ENCODE measurements at regions of chr17 and their contacts with region 1.

Region 1: DNA sequence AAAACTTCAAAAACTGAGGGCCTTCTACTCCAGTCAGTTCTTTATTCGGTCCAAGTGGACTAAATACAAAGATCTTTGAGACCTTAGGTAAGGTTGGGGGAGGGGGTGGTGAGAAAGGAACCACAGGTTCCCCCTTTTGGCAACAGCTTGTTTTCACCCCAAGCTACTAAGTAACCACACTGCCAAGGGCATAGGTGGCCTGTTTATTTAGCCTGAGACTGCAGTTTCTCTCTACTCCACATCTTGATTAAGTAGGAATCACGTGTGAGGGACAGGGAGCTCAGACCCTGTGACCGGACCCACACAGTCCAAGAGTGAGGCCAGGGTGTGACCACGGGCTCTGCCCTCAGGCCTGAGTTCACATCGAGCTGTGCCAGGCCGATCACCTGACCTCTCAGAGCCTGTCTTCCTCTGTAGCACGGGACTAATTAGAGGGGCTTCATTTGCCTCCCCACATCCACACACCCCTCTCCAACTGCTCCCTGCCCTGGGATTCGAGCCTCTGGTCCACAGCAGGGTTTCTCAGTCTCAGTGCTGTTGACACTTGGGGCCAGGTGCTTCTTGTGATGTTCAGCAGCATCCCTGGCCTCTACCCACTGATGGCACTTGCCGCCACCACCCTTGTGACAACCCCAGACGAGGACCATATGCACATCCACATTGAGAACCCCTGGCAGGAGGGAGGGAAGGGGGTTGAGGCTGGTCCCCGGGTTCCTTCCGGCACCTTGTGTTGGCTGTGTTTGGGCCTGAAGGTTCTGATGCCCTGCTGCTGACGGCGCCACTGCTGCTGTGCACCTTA is 17.8 kb downstream of the ST6GALNAC2 start:
- DNase-seq: peak; percentile 60
- ATAC-seq: peak; percentile 45
- H3K4me3 ChIP-seq: no peak overlapping the region
- H3K27ac ChIP-seq: peak overlapping the region; percentile 45
- H3K4me1 ChIP-seq: peaks cover 75% of the 10 kb centered on the region
- H3K27me3 ChIP-seq: no peaks in the 10 kb centered on the region
- CTCF ChIP-seq: no peak
- EP300 ChIP-seq: no peak
- POLR2A ChIP-seq: peak in 1 of 2 experiments; percentile 30
- RAD21 ChIP-seq: peak; percentile 7; the same call in 1 of the 2 replicates

Region 2: GRCh38 chr17:76529224-76530094 is 38.4 kb before region 1 on chr17:
- CTCF ChIA-PET with region 1: no interaction called
- POLR2A ChIA-PET with region 1: interaction called, 13 read pairs
- in situ Hi-C with region 1: no loop called
- intact Hi-C with region 1: no loop called
- DNase-seq: peak; percentile 61
- ATAC-seq: peak; percentile 13
- H3K4me3 ChIP-seq: peak overlapping the region in 1 of 3 experiments; percentile 35; a peak in 1 of 6 replicates
- H3K27ac ChIP-seq: peak overlapping the region; percentile 60
- H3K4me1 ChIP-seq: peaks cover 91% of the 10 kb centered on the region
- H3K27me3 ChIP-seq: no peaks in the 10 kb centered on the region
- CTCF ChIP-seq: peak; percentile 22; the same call in 1 of the 2 replicates
- EP300 ChIP-seq: peak; percentile 19; a peak in 1 of 4 replicates
- POLR2A ChIP-seq: no peak
- RAD21 ChIP-seq: no peak

Region 3: DNA sequence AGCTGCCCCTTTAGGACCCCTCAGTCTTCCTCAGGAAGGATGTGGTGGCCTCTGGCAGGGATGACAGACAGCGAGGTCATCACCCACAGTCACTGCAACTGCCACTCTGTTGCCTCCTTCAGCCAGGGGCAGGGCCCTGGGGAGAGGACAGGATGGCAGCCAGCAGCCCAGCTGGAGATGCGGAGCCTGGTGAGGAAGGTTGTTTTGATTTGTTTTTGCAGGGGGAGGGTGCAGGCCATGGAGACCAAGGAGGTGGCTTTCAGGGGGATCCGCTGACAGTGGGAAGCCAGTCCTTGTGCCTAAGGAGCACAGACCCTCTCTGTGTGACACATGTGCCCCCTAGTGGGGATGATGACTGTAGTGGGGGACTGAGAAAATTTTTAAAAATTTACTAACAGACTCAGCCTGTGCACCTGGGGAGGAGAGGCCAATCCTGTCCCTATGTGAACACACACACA is 20.6 kb before region 1 on chr17:
- CTCF ChIA-PET with region 1: no interaction called
- POLR2A ChIA-PET with region 1: interaction called, 17 read pairs
- in situ Hi-C with region 1: no loop called
- intact Hi-C with region 1: no loop called
- DNase-seq: peak; percentile 74
- ATAC-seq: peak; percentile 73
- H3K4me3 ChIP-seq: peak overlapping the region in 1 of 3 experiments; percentile 66; a peak in 1 of 6 replicates
- H3K27ac ChIP-seq: no peak overlapping the region
- H3K4me1 ChIP-seq: peaks cover 62% of the 10 kb centered on the region
- H3K27me3 ChIP-seq: no peaks in the 10 kb centered on the region
- CTCF ChIP-seq: peak; percentile 95
- EP300 ChIP-seq: no peak
- POLR2A ChIP-seq: no peak
- RAD21 ChIP-seq: peak; percentile 97

Region 4: GRCh38 chr17:76585818-76586593 is 18.2 kb after region 1 on chr17 and contains the start of gene ST6GALNAC2:
- CTCF ChIA-PET with region 1: no interaction called
- POLR2A ChIA-PET with region 1: interaction called, 8 read pairs
- in situ Hi-C with region 1: no loop called
- intact Hi-C with region 1: loop called (anchors 2 kb)
- DNase-seq: peak; percentile 66
- ATAC-seq: peak; percentile 93
- H3K4me3 ChIP-seq: peak within 1 kb of the TSS; percentile 55 to 72 (median 58)
- H3K27ac ChIP-seq: no peak within 1 kb of the TSS
- H3K4me1 ChIP-seq: peaks cover 53% of the 10 kb centered on the region
- H3K27me3 ChIP-seq: peaks cover 11 to 40% of the 10 kb centered on the region in 2 experiments; a peak in 4 of 5 replicates
- CTCF ChIP-seq: peak; percentile 90
- EP300 ChIP-seq: no peak
- POLR2A ChIP-seq: no peak
- RAD21 ChIP-seq: peak; percentile 98
- total RNA-seq, gene ST6GALNAC2: 0.49 and 0.84 TPM in 2 replicates

Region 5: DNA sequence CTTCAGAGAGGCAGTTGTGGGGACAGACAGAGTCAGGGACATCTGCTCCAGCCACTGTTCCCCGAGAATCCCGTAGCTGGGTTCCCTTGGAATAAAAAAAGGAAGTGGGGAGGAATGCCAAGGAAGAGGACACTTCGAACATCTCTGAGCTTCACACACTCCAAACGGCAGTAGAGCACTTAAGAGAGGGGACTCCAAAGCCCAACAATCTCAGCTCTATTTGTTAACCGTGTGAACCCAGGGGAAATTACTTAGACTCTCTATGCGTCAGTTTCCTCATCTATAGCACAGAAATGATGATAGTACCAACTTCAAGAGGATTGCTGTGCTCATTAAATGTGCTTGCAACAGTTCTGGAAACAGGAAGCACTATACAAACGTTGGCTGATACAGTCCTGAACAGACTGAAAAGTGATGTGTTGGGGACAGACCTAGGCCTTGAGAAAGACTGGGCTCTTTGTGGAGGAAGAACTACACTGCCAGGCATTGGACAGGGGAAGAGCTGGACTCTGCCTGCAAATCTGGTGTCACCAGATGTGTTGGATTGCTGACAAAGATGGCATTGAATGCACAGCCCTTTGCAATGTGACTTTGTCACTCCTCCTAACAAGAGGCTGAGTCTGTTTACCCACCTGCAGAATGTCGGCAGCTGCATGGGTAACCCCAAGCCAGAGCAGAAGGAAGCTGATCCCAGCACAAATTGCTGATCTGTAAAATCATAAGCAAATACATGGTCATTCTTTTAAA is 30.1 kb after region 1 on chr17:
- CTCF ChIA-PET with region 1: no interaction called
- POLR2A ChIA-PET with region 1: interaction called, 14 read pairs
- in situ Hi-C with region 1: no loop called
- intact Hi-C with region 1: no loop called
- DNase-seq: peak; percentile 67
- ATAC-seq: peak; percentile 71
- H3K4me3 ChIP-seq: peak overlapping the region in 1 of 3 experiments; percentile 38; a peak in 2 of 6 replicates
- H3K27ac ChIP-seq: peak overlapping the region; percentile 65
- H3K4me1 ChIP-seq: peaks cover 77% of the 10 kb centered on the region
- H3K27me3 ChIP-seq: no peaks in the 10 kb centered on the region
- CTCF ChIP-seq: no peak
- EP300 ChIP-seq: no peak
- POLR2A ChIP-seq: no peak
- RAD21 ChIP-seq: no peak

Region 6: GRCh38 chr17:76612977-76613851 is 45.4 kb after region 1 on chr17:
- CTCF ChIA-PET with region 1: no interaction called
- POLR2A ChIA-PET with region 1: interaction called, 15 read pairs
- in situ Hi-C with region 1: no loop called
- intact Hi-C with region 1: no loop called
- DNase-seq: peak; percentile 94
- ATAC-seq: peak; percentile 95
- H3K4me3 ChIP-seq: peak overlapping the region; percentile 17 to 70 (median 32)
- H3K27ac ChIP-seq: peak overlapping the region; percentile 57
- H3K4me1 ChIP-seq: peaks cover 34% of the 10 kb centered on the region
- H3K27me3 ChIP-seq: peaks cover 0 to 6% of the 10 kb centered on the region in 2 experiments; a peak in 1 of 5 replicates
- CTCF ChIP-seq: peak; percentile 71
- EP300 ChIP-seq: no peak
- POLR2A ChIP-seq: no peak
- RAD21 ChIP-seq: peak; percentile 57

Region 7: GRCh38 chr17:76623271-76624146 is 55.7 kb after region 1 on chr17:
- CTCF ChIA-PET with region 1: interaction called, 10 read pairs
- POLR2A ChIA-PET with region 1: no interaction called
- in situ Hi-C with region 1: loop called (anchors 10 kb)
- intact Hi-C with region 1: no loop called
- DNase-seq: peak; percentile 41
- ATAC-seq: peak; percentile 84
- H3K4me3 ChIP-seq: peak overlapping the region in 2 of 3 experiments; percentile 44; a peak in 4 of 6 replicates
- H3K27ac ChIP-seq: no peak overlapping the region
- H3K4me1 ChIP-seq: peaks cover 13% of the 10 kb centered on the region
- H3K27me3 ChIP-seq: peaks cover 0 to 2% of the 10 kb centered on the region in 2 experiments; a peak in 1 of 5 replicates
- CTCF ChIP-seq: peak; percentile 93
- EP300 ChIP-seq: no peak
- POLR2A ChIP-seq: no peak
- RAD21 ChIP-seq: peak; percentile 95